ENCODE measurements at regions of chr20 and their contacts with region 1.

Region 1: DNA sequence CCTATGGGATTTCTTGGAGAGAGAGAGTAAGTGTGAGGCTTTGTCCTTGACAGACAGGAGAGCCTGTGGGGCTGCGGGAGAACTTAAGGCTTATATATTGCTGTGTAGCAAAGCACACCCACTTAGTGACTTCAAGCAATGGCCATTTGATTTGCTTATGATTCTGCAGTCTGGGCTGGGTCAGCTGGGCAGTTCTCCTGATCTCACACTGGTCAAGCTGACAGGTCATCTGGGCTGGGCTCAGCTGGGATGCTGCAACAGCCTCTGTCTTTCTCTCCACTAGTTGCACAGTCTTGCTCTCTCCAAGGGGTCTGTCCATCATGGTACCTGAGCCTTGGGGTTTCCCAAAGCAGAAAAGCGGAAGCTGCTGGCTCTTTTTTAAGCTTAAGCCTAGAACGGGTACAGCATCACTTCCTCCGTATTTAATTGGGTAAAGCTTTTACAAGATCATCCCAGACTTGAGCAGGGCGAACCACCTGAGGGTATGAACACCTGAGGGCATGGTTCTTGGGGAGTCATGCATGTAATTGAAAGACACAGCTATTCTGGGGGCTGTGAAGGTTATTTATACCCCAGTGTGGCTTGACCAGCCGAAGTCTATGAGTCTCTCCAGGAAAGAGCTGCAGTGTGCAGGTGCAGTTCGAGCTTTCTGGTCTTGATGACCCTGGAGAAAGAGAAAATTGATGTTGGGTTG is 13.3 kb upstream of the GGTLC1 start:
- DNase-seq: no peak
- ATAC-seq: no peak
- H3K4me3 ChIP-seq: no peak overlapping the region
- H3K27ac ChIP-seq: no peak overlapping the region
- H3K4me1 ChIP-seq: no peaks in the 10 kb centered on the region
- H3K27me3 ChIP-seq: peaks cover 0 to 6% of the 10 kb centered on the region in 2 donors
- CTCF ChIP-seq: no peak
- POLR2A ChIP-seq: no peak

Region 2: GRCh38 chr20:23920417-23921325 is 81.2 kb before region 1 on chr20:
- intact Hi-C with region 1: loop called in 1 of 2 experiments (anchors 10 kb)
- DNase-seq: peak in 1 of 3 donors; percentile 23
- ATAC-seq: no peak
- H3K4me3 ChIP-seq: no peak overlapping the region
- H3K27ac ChIP-seq: no peak overlapping the region
- H3K4me1 ChIP-seq: no peaks in the 10 kb centered on the region
- H3K27me3 ChIP-seq: no peaks in the 10 kb centered on the region
- CTCF ChIP-seq: no peak
- POLR2A ChIP-seq: no peak

Region 3: GRCh38 chr20:24045621-24046318 is 43.9 kb after region 1 on chr20:
- intact Hi-C with region 1: no loop called
- DNase-seq: no peak
- ATAC-seq: peak in 2 of 4 donors; percentile 21 to 45
- H3K4me3 ChIP-seq: no peak overlapping the region
- H3K27ac ChIP-seq: no peak overlapping the region
- H3K4me1 ChIP-seq: no peaks in the 10 kb centered on the region
- H3K27me3 ChIP-seq: no peaks in the 10 kb centered on the region
- CTCF ChIP-seq: no peak
- POLR2A ChIP-seq: no peak

Region 4: GRCh38 chr20:24318569-24319352 is 316.9 kb after region 1 on chr20:
- intact Hi-C with region 1: no loop called
- DNase-seq: no peak
- ATAC-seq: no peak
- H3K4me3 ChIP-seq: no peak overlapping the region
- H3K27ac ChIP-seq: no peak overlapping the region
- H3K4me1 ChIP-seq: no peaks in the 10 kb centered on the region
- H3K27me3 ChIP-seq: no peaks in the 10 kb centered on the region
- CTCF ChIP-seq: no peak
- POLR2A ChIP-seq: no peak